ENCODE measurements at regions of chr2 and their contacts with region 1.

Region 1: DNA sequence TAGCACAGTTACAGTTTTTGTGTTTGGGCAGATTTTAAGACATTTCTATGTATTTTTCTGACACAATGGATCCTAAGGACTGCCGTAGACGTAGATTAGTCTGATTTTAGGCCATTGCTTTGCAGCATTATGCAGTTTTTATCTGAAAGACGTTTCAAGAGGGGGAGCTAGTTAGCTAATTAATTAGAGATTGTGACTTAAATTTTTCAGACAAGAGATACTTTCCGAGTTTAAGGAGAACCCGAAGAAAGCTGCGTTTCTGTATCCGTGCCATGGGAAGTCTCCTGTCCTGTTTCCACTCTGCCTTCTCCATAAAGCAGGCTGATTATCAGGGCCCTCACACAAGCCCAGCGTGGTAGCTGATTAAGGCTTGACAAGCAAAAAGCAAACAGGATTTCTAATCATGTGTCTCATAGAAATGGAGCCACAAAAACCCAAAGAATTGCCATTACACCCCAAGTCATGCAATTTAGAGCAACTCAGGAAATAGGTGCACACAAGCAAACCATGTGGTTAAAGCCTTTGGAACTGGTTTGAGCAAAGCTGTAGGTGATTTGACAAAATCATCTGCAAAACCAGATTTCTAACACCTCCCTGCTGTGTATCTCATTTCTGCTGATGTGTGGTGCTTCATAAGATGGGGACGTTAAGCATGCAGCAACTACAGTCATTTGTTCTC is 808.1 kb downstream of the RNF144A start:
- DNase-seq: peak in 5 of 9 donors; percentile 17 to 51 (median 38)
- ATAC-seq: peak; percentile 78
- H3K4me3 ChIP-seq: peak overlapping the region; percentile 25
- H3K4me3 Mint-ChIP-seq: peak overlapping the region in 9 of 10 donors; percentile 26 to 86 (median 58)
- H3K27ac ChIP-seq: no peak overlapping the region
- H3K27ac Mint-ChIP-seq: peak overlapping the region; percentile 8 to 89 (median 65)
- H3K4me1 ChIP-seq: peaks cover 17 to 34% of the 10 kb centered on the region in 2 donors
- H3K4me1 Mint-ChIP-seq: peaks cover 13 to 63% (median 34%) of the 10 kb centered on the region in 7 donors
- H3K27me3 ChIP-seq: no peaks in the 10 kb centered on the region
- H3K27me3 Mint-ChIP-seq: no peaks in the 10 kb centered on the region

Region 2: DNA sequence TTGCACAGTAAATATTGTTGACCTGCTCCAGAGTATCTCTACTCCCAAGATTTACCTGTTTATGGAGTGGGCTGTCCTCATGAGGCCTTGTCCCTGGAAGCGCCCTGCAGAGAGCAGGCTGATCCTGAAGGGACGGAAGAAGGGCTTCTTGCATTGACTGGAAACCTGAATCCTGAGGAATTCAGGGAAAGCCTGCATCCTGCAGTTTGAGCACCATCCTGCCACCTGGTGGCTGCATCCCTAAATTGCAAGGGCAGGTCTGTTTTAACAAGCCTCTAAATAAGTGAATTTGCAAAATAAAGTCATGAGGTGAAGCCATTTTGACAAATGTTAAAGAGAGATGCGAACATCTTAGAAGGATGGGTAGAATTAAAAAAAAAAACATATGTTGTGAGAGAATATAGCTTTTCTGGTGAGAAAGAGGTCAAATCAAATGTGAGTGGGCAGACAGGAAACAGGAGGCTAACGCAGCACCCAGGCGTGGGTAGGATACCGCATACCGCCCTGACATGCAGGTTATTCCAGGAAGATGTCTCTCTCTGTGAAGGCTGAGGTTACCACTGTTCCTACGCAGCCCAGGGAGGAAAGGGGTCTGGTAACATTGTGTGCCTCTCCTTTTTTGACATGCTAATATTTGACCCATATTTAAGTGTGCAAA is 53.2 kb before region 1 on chr2:
- CTCF ChIA-PET with region 1: no interaction called
- POLR2A ChIA-PET with region 1: no interaction called
- intact Hi-C with region 1: loop called in 1 of 2 experiments (anchors 1 kb)
- DNase-seq: peak in 8 of 9 donors; percentile 17 to 69 (median 47)
- ATAC-seq: peak; percentile 61
- H3K4me3 ChIP-seq: no peak overlapping the region
- H3K4me3 Mint-ChIP-seq: peak overlapping the region; percentile 16 to 84 (median 69)
- H3K27ac ChIP-seq: no peak overlapping the region
- H3K27ac Mint-ChIP-seq: peak overlapping the region; percentile 77 to 91 (median 87)
- H3K4me1 ChIP-seq: peaks cover 9 to 19% of the 10 kb centered on the region in 2 donors
- H3K4me1 Mint-ChIP-seq: peaks cover 24 to 59% (median 40%) of the 10 kb centered on the region in 7 donors
- H3K27me3 ChIP-seq: no peaks in the 10 kb centered on the region
- H3K27me3 Mint-ChIP-seq: no peaks in the 10 kb centered on the region

Region 3: DNA sequence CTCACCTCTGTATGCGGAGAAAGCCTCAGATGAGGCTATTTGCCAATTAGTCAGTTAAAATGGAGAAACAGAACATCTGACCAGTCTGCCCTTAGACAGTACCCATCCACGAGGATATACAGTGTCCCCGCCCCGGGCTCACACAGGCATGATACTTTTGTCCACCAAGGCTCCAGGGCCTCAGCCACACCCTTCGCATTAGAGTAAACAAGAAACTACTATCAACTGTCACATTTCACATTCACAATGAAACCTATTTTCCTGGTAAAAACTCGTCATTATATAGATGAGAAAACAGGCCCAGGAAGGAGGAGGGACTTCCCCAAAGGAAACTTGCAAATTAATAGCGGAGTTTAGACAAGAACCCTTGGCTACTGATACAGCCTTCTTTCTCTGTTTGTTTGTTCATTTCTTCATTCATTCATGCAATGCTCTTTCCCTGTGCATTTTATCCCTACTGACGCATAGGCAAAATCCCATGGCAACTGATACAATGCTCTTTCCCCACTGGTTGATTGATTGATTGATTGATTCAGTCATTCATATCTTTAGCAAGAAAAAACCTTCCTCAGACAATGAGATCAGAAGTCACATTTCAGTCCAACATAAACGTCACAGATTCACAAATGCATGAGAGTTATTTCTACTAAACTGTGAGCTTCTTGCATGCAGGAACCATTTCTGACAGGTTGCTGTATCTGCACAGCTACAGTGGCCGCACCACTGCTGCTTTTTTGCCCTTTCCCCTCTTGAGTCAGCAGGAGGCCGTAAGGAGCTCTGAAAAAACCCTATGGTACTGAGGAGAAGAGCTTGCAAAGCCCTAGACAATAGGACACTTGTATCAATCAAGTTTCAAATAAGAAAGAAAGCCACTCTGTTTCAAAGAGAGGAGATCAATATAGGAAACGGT is 31.0 kb before region 1 on chr2:
- CTCF ChIA-PET with region 1: interaction called, 4 read pairs
- POLR2A ChIA-PET with region 1: no interaction called
- intact Hi-C with region 1: loop called in 1 of 2 experiments (anchors 1 kb)
- DNase-seq: no peak
- ATAC-seq: no peak
- H3K4me3 ChIP-seq: no peak overlapping the region
- H3K4me3 Mint-ChIP-seq: peak overlapping the region in 1 of 10 donors; percentile 65
- H3K27ac ChIP-seq: no peak overlapping the region
- H3K27ac Mint-ChIP-seq: peak overlapping the region in 1 of 9 donors; percentile 89
- H3K4me1 ChIP-seq: peaks cover 0 to 7% of the 10 kb centered on the region in 2 donors
- H3K4me1 Mint-ChIP-seq: peaks cover 6 to 39% (median 12%) of the 10 kb centered on the region in 7 donors
- H3K27me3 ChIP-seq: no peaks in the 10 kb centered on the region
- H3K27me3 Mint-ChIP-seq: no peaks in the 10 kb centered on the region

Region 4: GRCh38 chr2:7773362-7774360 is 48.4 kb after region 1 on chr2:
- CTCF ChIA-PET with region 1: no interaction called
- POLR2A ChIA-PET with region 1: no interaction called
- intact Hi-C with region 1: loop called in 1 of 2 experiments (anchors 2 kb)
- DNase-seq: peak in 1 of 9 donors; percentile 60
- ATAC-seq: peak; percentile 81
- H3K4me3 ChIP-seq: no peak overlapping the region
- H3K4me3 Mint-ChIP-seq: peak overlapping the region in 2 of 10 donors; percentile 43 to 64
- H3K27ac ChIP-seq: no peak overlapping the region
- H3K27ac Mint-ChIP-seq: peak overlapping the region in 3 of 9 donors; percentile 29 to 82 (median 57)
- H3K4me1 ChIP-seq: peaks cover 0 to 13% of the 10 kb centered on the region in 2 donors
- H3K4me1 Mint-ChIP-seq: peaks cover 0 to 38% (median 13%) of the 10 kb centered on the region in 7 donors
- H3K27me3 ChIP-seq: no peaks in the 10 kb centered on the region
- H3K27me3 Mint-ChIP-seq: no peaks in the 10 kb centered on the region

Region 5: DNA sequence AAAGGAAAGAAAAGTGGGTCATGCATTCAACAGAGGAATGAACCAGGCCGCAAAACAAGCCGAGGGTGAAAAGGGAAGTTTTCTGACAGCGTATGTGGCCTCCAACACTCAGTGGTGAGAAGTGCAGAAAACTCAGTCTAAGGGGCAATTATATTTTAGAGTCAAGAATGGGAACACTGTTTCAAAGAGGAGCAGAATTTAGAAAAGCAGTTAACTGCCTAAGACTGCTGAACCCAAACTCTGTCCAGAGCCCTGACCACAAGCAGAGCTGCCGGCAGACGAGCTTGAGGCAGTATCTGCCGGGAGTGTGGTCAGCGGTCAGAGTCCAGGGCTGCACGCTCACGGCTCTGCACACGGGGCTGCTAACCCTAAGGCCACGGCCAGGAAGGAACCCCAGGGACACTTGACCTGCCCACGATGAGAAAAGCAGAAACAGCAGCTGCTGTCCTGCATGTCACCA is 609.6 kb after region 1 on chr2:
- CTCF ChIA-PET with region 1: no interaction called
- POLR2A ChIA-PET with region 1: no interaction called
- intact Hi-C with region 1: loop called in 1 of 2 experiments (anchors 10 kb)
- DNase-seq: no peak
- ATAC-seq: peak; percentile 76
- H3K4me3 ChIP-seq: no peak overlapping the region
- H3K4me3 Mint-ChIP-seq: peak overlapping the region in 1 of 10 donors; percentile 3
- H3K27ac ChIP-seq: no peak overlapping the region
- H3K27ac Mint-ChIP-seq: peak overlapping the region in 1 of 9 donors; percentile 62
- H3K4me1 ChIP-seq: peaks cover 14 to 22% of the 10 kb centered on the region in 2 donors
- H3K4me1 Mint-ChIP-seq: peaks cover 13 to 33% (median 14%) of the 10 kb centered on the region in 7 donors
- H3K27me3 ChIP-seq: no peaks in the 10 kb centered on the region
- H3K27me3 Mint-ChIP-seq: peaks cover 0 to 11% (median 0%) of the 10 kb centered on the region in 5 donors

Measured in naive thymus-derived CD4-positive, alpha-beta T cell (primary cell).